CD4-positive, alpha-beta T cell (primary cell): ENCODE measurements at regions of chr12 and their contacts with region 1.

Region 1: DNA sequence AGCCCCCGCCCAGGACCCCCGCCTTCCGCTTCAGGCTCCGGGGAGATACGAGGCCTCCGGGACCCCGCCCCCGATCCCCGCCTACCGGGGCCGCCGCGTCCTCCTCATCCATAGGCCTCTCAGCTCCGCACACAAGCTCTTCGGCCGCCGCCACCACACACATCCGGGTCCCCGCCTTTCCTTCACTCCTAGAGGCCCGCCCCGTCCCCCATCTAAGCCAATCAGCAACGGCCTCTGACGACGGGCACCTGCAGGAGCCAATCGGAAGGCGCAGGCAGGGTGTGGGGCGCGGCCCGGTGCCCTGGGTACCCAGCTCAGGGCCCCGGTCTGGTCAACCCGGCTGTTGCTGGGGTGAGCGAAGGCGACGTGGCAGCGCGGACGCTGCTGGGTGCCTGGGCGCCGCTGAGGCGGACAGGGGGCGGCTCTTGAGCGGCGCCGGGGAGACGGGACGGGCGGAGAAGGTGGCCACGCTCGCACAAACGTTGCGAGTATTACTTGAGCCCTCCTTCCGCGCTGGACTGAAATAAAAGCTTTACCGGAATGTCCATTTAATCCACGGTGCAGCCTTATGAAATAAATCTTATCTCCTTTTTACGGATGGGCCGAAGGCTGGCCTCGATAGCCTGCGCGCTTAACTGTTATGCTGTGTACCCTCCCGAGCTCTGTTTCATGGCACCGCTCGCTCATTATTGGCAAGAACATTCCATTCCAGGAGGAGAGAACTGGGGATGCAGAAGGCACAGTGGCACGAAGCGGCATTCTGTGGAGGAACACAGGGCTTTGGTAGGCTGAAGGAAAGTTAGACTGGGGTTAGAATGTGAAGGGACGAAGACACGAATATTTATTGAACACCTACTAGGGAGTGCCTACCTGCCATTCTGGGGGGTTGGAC is at the start of gene SPRYD3:
- DNase-seq: peak; percentile 94 to 98 (median 96)
- ATAC-seq: peak; percentile 94
- H3K4me3 ChIP-seq: peak within 1 kb of the TSS; percentile 72
- H3K4me3 Mint-ChIP-seq: peak within 1 kb of the TSS; percentile 95
- H3K27ac ChIP-seq: peak within 1 kb of the TSS; percentile 82 to 85
- H3K27ac Mint-ChIP-seq: peak within 1 kb of the TSS; percentile 98
- H3K4me1 ChIP-seq: peaks cover 34% of the 10 kb centered on the region
- H3K4me1 Mint-ChIP-seq: peaks cover 40% of the 10 kb centered on the region
- H3K27me3 ChIP-seq: no peaks in the 10 kb centered on the region
- H3K27me3 Mint-ChIP-seq: no peaks in the 10 kb centered on the region
- CTCF ChIP-seq: no peak
- total RNA-seq, gene SPRYD3: 17.7 to 21.0 TPM

Region 2: GRCh38 chr12:53005986-53006809 is 73.3 kb before region 1 on chr12 and contains the start of gene EIF4B:
- CTCF ChIA-PET with region 1: no interaction called
- POLR2A ChIA-PET with region 1: interaction called, 20 read pairs
- intact Hi-C with region 1: no loop called
- DNase-seq: peak; percentile 98 to 100 (median 99)
- ATAC-seq: peak; percentile 85
- H3K4me3 ChIP-seq: peak within 1 kb of the TSS; percentile 100
- H3K4me3 Mint-ChIP-seq: peak within 1 kb of the TSS; percentile 99
- H3K27ac ChIP-seq: peak within 1 kb of the TSS; percentile 90 to 97
- H3K27ac Mint-ChIP-seq: peak within 1 kb of the TSS; percentile 99
- H3K4me1 ChIP-seq: peaks cover 50% of the 10 kb centered on the region
- H3K4me1 Mint-ChIP-seq: peaks cover 57% of the 10 kb centered on the region
- H3K27me3 ChIP-seq: no peaks in the 10 kb centered on the region
- H3K27me3 Mint-ChIP-seq: no peaks in the 10 kb centered on the region
- CTCF ChIP-seq: no peak
- total RNA-seq, gene EIF4B: 794 to 806 TPM

Region 3: DNA sequence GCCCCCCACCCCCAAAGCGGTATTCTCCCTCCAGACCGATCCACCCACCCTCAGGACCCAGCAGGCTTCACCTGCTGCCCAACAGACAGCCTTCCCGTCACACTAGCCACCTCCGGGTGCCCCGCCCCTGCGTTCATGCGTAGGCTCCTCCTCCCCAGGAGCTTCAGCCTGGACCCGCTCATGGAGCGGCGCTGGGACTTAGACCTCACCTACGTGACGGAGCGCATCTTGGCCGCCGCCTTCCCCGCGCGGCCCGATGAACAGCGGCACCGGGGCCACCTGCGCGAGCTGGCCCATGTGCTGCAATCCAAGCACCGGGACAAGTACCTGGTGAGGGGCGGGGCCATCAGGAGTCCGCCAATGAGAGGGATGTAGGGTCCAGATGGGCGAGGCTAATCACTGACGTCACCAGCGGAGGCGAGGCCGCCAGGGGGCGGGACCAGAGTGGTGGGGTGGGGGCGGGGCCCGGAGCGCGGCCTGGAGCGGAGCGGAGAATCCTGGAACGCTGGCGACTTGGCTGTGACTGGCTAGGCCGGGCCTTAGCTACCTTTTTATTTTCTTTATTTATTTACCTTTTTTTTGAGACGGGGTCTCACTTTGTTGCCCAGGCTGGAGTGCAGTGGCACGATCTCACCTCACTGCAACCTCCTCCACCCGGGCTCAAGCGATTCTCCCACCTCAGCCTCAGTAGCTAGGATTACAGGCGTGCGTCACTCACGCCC is 25.2 kb before region 1 on chr12:
- CTCF ChIA-PET with region 1: interaction called, 4 read pairs
- POLR2A ChIA-PET with region 1: interaction called, 36 read pairs
- intact Hi-C with region 1: loop called in 1 of 2 experiments (anchors 2 kb)
- DNase-seq: peak; percentile 85 to 97 (median 91)
- ATAC-seq: peak; percentile 89
- H3K4me3 ChIP-seq: peak overlapping the region; percentile 85
- H3K4me3 Mint-ChIP-seq: peak overlapping the region; percentile 96
- H3K27ac ChIP-seq: peak overlapping the region; percentile 21 to 65
- H3K27ac Mint-ChIP-seq: peak overlapping the region; percentile 92
- H3K4me1 ChIP-seq: peaks cover 17% of the 10 kb centered on the region
- H3K4me1 Mint-ChIP-seq: peaks cover 15% of the 10 kb centered on the region
- H3K27me3 ChIP-seq: no peaks in the 10 kb centered on the region
- H3K27me3 Mint-ChIP-seq: no peaks in the 10 kb centered on the region
- CTCF ChIP-seq: no peak

Region 4: DNA sequence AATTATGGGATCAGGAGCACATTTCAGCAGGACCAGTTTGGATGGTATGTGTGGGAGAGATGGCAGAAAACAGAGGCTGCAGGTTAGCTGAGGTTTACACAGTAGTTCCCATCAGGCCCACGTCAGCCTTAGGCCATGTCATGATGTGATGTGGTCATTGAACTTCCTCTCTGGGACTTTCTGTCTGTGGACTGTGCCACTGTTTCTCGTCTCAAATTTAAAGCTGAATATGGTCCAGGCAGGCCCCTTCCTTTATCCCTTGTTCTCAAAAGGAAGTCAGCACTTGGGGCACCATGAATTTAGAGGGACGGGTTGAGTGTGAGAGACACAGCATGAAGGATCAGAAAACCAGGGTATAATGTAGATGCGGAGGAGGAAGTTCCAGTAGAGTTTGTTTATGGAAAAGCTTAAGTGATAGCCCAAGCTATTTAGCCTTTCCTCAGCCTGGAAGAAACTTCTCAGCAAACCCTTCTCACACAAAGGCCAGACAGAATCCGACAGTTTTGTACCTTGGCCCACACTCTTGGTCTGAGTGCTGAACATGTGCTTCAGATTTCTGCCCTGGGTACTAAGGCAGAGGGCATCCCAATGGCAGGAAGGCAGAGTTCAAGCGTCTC is 14.4 kb after region 1 on chr12:
- CTCF ChIA-PET with region 1: interaction called, 16 read pairs
- POLR2A ChIA-PET with region 1: interaction called, 37 read pairs
- intact Hi-C with region 1: loop called (anchors 1 to 2 kb)
- DNase-seq: peak in 3 of 14 experiments; percentile 2 to 42 (median 40)
- ATAC-seq: no peak
- H3K4me3 ChIP-seq: no peak overlapping the region
- H3K4me3 Mint-ChIP-seq: no peak overlapping the region
- H3K27ac ChIP-seq: no peak overlapping the region
- H3K27ac Mint-ChIP-seq: no peak overlapping the region
- H3K4me1 ChIP-seq: peaks cover 24% of the 10 kb centered on the region
- H3K4me1 Mint-ChIP-seq: peaks cover 18% of the 10 kb centered on the region
- H3K27me3 ChIP-seq: peaks cover 0 to 11% of the 10 kb centered on the region in 2 experiments
- H3K27me3 Mint-ChIP-seq: peaks cover 19% of the 10 kb centered on the region
- CTCF ChIP-seq: no peak

Region 5: DNA sequence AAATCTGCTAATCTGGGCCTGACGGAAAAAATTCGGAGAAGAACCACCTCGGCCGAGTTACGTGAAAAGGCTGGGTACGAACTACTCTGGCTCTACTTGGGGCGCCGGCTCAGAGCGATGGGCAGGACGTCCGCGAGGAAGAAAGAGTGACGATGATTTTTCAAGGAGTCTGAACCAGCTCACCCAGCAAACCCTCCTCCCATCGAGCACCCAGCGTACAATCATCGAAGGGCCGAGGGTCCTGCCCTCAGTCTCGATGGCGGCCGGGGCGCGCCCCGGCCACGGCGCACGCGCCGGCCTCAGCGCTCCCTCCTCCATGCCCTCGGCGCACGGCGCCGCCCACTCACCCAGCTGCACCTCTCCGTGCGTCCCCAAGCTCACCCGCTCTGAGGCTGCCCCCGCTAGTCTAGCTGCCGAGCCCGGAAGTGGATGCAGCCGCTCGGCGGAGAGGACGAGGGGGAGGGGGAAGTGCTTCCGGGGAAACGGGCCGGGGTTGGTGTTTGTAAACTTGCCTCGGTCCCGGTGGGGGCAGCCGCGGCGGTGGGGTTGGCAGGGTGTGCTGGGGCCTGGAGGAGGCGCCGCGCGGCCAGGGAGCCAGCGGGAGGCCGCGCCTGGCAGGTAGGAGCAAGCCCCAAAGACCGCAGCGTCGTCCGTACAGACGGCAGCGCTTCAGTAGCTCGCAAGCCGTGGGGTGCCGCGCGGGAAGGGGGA is 100.9 kb after region 1 on chr12 and contains the starts of genes CSAD and ZNF740:
- CTCF ChIA-PET with region 1: no interaction called
- POLR2A ChIA-PET with region 1: interaction called, 14 read pairs
- intact Hi-C with region 1: no loop called
- DNase-seq: peak; percentile 92 to 99 (median 97)
- ATAC-seq: peak; percentile 93
- H3K4me3 ChIP-seq: peak within 1 kb of the TSS; percentile 94
- H3K4me3 Mint-ChIP-seq: peak within 1 kb of the TSS; percentile 98
- H3K27ac ChIP-seq: peak within 1 kb of the TSS; percentile 87 to 92
- H3K27ac Mint-ChIP-seq: peak within 1 kb of the TSS; percentile 94
- H3K4me1 ChIP-seq: peaks cover 52% of the 10 kb centered on the region
- H3K4me1 Mint-ChIP-seq: peaks cover 57% of the 10 kb centered on the region
- H3K27me3 ChIP-seq: no peaks in the 10 kb centered on the region
- H3K27me3 Mint-ChIP-seq: no peaks in the 10 kb centered on the region
- CTCF ChIP-seq: no peak
- total RNA-seq, gene CSAD: 56.7 to 57.3 TPM
- total RNA-seq, gene ZNF740: 24.4 to 24.7 TPM

Region 6: GRCh38 chr12:53675651-53676453 is 596.4 kb after region 1 on chr12 and contains the start of gene ATP5MC2:
- CTCF ChIA-PET with region 1: no interaction called
- POLR2A ChIA-PET with region 1: no interaction called
- intact Hi-C with region 1: no loop called
- DNase-seq: peak; percentile 95 to 100 (median 96)
- ATAC-seq: peak; percentile 92
- H3K4me3 ChIP-seq: peak within 1 kb of the TSS; percentile 78
- H3K4me3 Mint-ChIP-seq: peak within 1 kb of the TSS; percentile 93
- H3K27ac ChIP-seq: peak within 1 kb of the TSS; percentile 58 to 66
- H3K27ac Mint-ChIP-seq: peak within 1 kb of the TSS; percentile 90
- H3K4me1 ChIP-seq: peaks cover 31% of the 10 kb centered on the region
- H3K4me1 Mint-ChIP-seq: peaks cover 32% of the 10 kb centered on the region
- H3K27me3 ChIP-seq: peaks cover 10 to 18% of the 10 kb centered on the region in 2 experiments
- H3K27me3 Mint-ChIP-seq: peaks cover 17% of the 10 kb centered on the region
- CTCF ChIP-seq: peak; percentile 99
- total RNA-seq, gene ATP5MC2: 235 to 245 TPM